ENCODE measurements at regions of chr9 and their contacts with region 1.

Region 1: GRCh38 chr9:124126571-124127289 is 115.2 kb downstream of the LHX2 start:
- DNase-seq: peak; percentile 13 to 77 (median 61)
- H3K4me3 ChIP-seq: no peak overlapping the region
- H3K27ac ChIP-seq: no peak overlapping the region
- H3K27me3 ChIP-seq: peaks cover 0 to 6% (median 0%) of the 10 kb centered on the region in 45 donors
- CTCF ChIP-seq: peak; percentile 90 to 100 (median 98)

Region 2: DNA sequence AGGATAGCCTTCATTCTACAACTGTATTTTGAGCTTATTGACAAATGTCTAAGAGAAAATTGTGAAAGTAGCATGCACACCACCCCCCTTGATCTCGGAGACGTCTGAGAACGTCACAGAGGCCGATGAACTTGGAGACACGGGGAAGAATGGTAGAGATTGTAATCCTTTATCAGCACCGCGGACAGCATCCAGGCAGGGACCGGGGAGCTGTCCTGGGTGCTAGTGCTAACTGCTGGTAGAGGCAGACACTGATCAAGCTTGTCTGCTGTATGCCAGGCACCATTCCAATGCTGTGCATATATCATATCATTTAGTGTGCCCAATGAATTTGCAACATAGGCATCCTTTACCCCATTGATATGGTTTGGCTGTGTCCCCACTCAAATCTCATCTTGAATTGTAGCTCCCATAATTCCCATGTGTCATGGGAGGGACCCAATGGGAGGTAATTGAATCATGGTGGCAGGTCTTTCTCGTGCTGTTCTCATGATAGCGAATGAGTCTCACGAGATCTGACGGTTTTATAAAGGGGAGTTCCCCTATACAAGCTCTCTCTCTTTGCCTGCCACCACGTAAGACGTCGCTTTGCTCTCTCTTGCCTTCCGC is 16.3 kb before region 1 on chr9:
- intact Hi-C with region 1: no loop called
- DNase-seq: peak in 5 of 10 donors; percentile 29 to 50 (median 32)
- H3K4me3 ChIP-seq: no peak overlapping the region
- H3K27ac ChIP-seq: no peak overlapping the region
- H3K27me3 ChIP-seq: peaks cover 0 to 4% (median 0%) of the 10 kb centered on the region in 45 donors
- CTCF ChIP-seq: peak in 1 of 56 donors; percentile 23

Region 3: GRCh38 chr9:124180557-124180956 is 53.8 kb after region 1 on chr9:
- intact Hi-C with region 1: no loop called
- DNase-seq: peak; percentile 17 to 83 (median 70)
- H3K4me3 ChIP-seq: peak overlapping the region in 2 of 59 donors; percentile 0 to 8
- H3K27ac ChIP-seq: no peak overlapping the region
- H3K27me3 ChIP-seq: peaks cover 0 to 26% (median 4%) of the 10 kb centered on the region in 45 donors
- CTCF ChIP-seq: no peak

Region 4: GRCh38 chr9:124190761-124191160 is 64.0 kb after region 1 on chr9:
- intact Hi-C with region 1: loop called in 1 of 2 experiments (anchors 5 kb)
- DNase-seq: peak; percentile 18 to 92 (median 82)
- H3K4me3 ChIP-seq: peak overlapping the region in 5 of 59 donors; percentile 6 to 24 (median 12)
- H3K27ac ChIP-seq: peak overlapping the region in 55 of 59 donors; percentile 20 to 95 (median 75)
- H3K27me3 ChIP-seq: peaks cover 0 to 11% (median 0%) of the 10 kb centered on the region in 45 donors
- CTCF ChIP-seq: peak in 25 of 56 donors; percentile 12 to 50 (median 27)

Region 5: GRCh38 chr9:124297553-124297905 is 170.8 kb after region 1 on chr9:
- intact Hi-C with region 1: loop called in 1 of 2 experiments (anchors 2 kb)
- DNase-seq: peak in 7 of 10 donors; percentile 26 to 71 (median 60)
- H3K4me3 ChIP-seq: peak overlapping the region in 3 of 59 donors; percentile 5 to 26 (median 14)
- H3K27ac ChIP-seq: peak overlapping the region in 32 of 59 donors; percentile 8 to 78 (median 42)
- H3K27me3 ChIP-seq: no peaks in the 10 kb centered on the region
- CTCF ChIP-seq: no peak

Region 6: DNA sequence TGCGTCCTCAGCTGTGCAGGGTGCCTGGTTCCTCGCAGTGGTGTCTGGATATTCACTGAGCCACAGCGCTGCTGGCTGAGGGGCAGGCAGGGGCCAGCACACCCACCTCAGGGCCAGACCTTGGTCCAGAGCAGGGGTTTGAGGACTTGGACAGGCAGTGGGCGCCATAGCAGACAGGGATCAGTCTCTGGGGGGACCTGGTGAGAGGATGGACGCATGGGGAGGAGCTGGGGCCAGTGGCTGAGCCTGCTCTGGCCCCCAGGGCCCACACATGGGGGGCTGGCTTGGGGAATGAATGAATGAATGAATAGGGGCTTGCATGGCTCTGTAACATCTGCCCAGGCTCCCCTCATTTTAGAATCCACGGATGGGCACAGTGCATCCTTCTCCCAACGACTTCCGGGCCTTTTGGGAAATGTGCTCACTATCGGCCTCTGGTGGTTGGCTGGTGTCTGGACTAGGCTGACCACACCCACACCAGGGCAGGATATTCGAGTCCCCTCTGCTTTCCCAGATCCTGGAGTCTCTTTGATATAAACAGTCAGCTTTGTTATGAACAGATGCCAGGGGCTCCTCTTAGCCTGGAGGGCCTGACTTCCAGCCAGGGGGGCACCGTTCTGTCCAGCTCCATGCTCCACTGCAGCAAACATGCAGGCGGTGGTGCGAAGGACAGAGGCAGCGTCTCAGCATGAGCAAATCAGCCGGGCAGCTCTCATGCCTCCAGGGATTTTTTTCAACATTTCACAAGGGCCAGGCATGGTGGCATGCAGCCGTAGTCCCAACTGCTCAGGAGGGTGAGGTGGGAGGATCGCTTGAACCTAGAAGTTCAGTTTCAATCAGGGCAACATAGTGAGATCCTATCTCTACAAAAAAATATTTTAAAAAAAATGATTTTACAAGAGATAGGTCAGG is 193.6 kb after region 1 on chr9:
- intact Hi-C with region 1: loop called (anchors 2 to 5 kb)
- DNase-seq: peak in 9 of 10 donors; percentile 28 to 75 (median 71)
- H3K4me3 ChIP-seq: no peak overlapping the region
- H3K27ac ChIP-seq: peak overlapping the region in 1 of 59 donors; percentile 18
- H3K27me3 ChIP-seq: no peaks in the 10 kb centered on the region
- CTCF ChIP-seq: peak; percentile 54 to 89 (median 79)

Region 7: GRCh38 chr9:124392871-124393460 is 266.2 kb after region 1 on chr9:
- intact Hi-C with region 1: loop called (anchors 5 kb)
- DNase-seq: peak; percentile 25 to 91 (median 72)
- H3K4me3 ChIP-seq: peak overlapping the region in 10 of 59 donors; percentile 1 to 42 (median 14)
- H3K27ac ChIP-seq: peak overlapping the region in 47 of 59 donors; percentile 9 to 84 (median 56)
- H3K27me3 ChIP-seq: no peaks in the 10 kb centered on the region
- CTCF ChIP-seq: peak; percentile 41 to 90 (median 73)

Region 8: DNA sequence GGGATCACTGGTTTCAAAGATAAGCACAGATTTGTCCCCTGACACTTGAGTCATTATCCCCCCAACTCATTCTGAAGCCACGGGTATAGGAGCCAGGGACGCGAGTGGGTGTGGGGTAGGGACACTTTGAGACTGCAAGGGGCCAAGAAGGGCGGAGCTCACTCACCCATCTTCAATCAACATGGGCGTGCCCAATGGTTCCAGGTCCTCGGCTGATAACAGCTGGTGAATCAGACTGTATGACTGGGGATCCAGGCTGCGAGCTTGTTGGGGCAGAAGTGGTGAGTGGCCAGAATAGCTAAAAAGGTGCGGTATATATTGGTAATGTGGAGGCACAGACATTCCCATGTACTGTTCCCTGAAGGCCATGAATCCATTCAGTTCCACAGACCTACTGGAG is 411.2 kb after region 1 on chr9:
- intact Hi-C with region 1: loop called (anchors 5 kb)
- DNase-seq: no peak
- H3K4me3 ChIP-seq: no peak overlapping the region
- H3K27ac ChIP-seq: no peak overlapping the region
- H3K27me3 ChIP-seq: no peaks in the 10 kb centered on the region
- CTCF ChIP-seq: no peak

Measured in dorsolateral prefrontal cortex (tissue), 120 donors.